OCI-LY7 (cell line): ENCODE measurements at regions of chr2 and their contacts with region 1.

Region 1: DNA sequence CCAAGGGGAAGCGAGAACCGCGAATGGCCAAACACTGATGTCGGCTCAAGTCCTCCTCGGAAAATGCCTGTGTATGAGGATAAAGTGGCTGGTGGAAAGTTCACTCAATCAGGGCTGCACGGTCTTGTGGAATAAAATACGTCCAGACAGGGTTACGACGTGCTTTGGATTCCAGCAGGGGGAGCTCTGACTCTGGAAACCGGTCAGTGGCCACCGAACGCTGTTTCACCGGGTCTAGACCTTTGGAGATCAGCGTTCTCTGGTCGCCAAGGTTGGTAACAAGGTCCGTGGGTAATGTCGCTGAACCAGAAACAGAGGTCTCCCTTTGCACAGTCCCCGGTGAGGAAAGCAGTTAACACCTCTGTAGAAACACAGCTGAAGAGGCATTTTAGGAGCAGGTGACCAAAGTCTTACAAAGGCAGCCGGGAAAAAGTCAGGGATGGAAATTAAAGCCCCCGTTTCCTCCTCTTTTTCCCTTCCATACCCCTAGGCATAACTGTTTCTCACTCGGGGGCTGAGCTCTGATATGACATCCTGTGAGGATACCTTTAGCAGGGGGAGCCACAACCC is 47.8 kb downstream of the CDCA7 start:
- DNase-seq: peak; percentile 78
- H3K4me3 ChIP-seq: no peak overlapping the region
- H3K27ac ChIP-seq: no peak overlapping the region
- H3K4me1 ChIP-seq: no peaks in the 10 kb centered on the region
- CTCF ChIP-seq: peak; percentile 89

Region 2: GRCh38 chr2:173326806-173327205 is 75.7 kb before region 1 on chr2:
- CTCF ChIA-PET with region 1: no interaction called
- POLR2A ChIA-PET with region 1: no interaction called
- intact Hi-C with region 1: no loop called
- DNase-seq: no peak
- H3K4me3 ChIP-seq: no peak overlapping the region
- H3K27ac ChIP-seq: no peak overlapping the region
- H3K4me1 ChIP-seq: no peaks in the 10 kb centered on the region
- CTCF ChIP-seq: no peak

Region 3: DNA sequence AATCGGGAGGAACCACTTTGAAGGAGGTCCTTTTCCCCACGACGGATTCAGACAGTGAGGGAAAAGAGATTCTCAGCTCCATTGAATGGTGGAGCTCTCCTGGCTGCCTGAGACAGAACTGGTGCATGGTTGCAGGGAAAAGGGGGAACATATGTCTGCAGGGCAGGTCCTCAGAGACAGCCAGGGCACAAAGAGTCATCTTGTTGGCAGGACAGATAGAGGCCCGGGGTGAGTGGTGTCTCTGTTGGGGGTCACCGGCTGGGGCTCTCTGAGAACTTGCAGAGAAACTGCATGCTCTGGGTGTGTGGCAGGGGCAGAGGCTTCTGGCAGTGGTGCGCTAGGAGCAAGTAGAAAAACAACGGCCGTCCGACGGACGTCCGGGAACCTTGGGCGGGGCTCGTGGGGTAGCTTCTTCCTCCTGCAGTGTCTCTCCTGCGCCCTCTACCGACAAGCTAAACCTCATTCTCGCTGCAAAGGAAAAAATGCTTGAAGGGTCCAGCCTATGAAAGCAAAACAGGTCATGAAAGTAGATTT is 46.5 kb after region 1 on chr2:
- CTCF ChIA-PET with region 1: no interaction called
- POLR2A ChIA-PET with region 1: no interaction called
- intact Hi-C with region 1: loop called (anchors 1 kb)
- DNase-seq: peak; percentile 59
- H3K4me3 ChIP-seq: no peak overlapping the region
- H3K27ac ChIP-seq: no peak overlapping the region
- H3K4me1 ChIP-seq: no peaks in the 10 kb centered on the region
- CTCF ChIP-seq: peak; percentile 79

Region 4: GRCh38 chr2:173667417-173667816 is 264.9 kb after region 1 on chr2:
- CTCF ChIA-PET with region 1: no interaction called
- POLR2A ChIA-PET with region 1: no interaction called
- intact Hi-C with region 1: loop called (anchors 5 kb)
- DNase-seq: no peak
- H3K4me3 ChIP-seq: no peak overlapping the region
- H3K27ac ChIP-seq: no peak overlapping the region
- H3K4me1 ChIP-seq: no peaks in the 10 kb centered on the region
- CTCF ChIP-seq: peak; percentile 29; the same call in 1 of the 2 replicates

Region 5: DNA sequence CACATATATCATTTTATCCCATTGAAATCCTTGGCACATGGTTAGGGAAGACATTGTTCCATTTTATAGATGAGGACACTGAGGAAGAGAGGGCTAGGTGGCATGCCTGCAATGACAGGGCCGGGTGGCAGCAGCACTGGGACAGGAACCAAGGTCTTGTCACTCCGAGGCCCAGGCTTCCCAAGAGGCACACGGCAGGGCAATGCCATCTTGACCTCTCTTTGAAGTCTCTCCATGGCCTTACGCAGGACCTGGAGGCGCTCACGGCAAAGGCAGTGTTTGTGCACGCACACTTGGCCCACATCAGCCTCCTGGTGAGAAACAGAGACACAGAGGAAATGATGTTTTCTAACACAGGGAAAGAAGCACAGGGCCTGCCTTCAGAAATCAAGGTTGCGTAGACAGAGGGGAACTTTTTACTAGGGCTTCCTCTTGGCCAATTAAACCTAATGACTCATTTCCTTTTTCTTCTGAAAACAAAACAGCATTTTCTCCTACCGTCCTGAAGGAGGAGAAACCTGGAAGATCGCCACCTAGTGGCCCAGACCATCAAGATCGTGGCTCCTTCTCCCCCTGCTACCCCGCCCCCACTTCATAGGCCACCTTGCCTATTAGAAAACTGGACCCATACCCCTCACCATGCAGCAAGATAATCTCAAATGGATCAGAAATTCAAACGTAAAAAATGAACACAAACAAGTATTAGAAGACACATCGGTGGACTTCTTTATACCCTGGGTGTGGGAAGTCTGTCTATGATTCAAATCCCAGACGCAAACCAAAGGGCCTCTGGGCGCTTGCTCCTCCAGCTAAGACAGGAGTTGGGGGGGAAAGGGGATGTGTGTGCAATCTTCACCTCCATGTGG is 637.3 kb after region 1 on chr2:
- CTCF ChIA-PET with region 1: no interaction called
- POLR2A ChIA-PET with region 1: no interaction called
- intact Hi-C with region 1: loop called (anchors 10 kb)
- DNase-seq: peak; percentile 92
- H3K4me3 ChIP-seq: peak overlapping the region; percentile 38
- H3K27ac ChIP-seq: peak overlapping the region; percentile 63
- H3K4me1 ChIP-seq: peaks cover 6% of the 10 kb centered on the region
- CTCF ChIP-seq: peak; percentile 94